PC-9 (cell line): ENCODE measurements at regions of chr22 and their contacts with region 1.

Region 1: GRCh38 chr22:45918459-45919370 is 58.2 kb downstream of the WNT7B start:
- DNase-seq: peak; percentile 92 to 97
- H3K4me3 ChIP-seq: peak overlapping the region; percentile 37; the same call in 1 of the 2 replicates
- H3K27ac ChIP-seq: peak overlapping the region; percentile 85
- H3K4me1 ChIP-seq: peaks cover 70% of the 10 kb centered on the region
- H3K27me3 ChIP-seq: no peaks in the 10 kb centered on the region
- CTCF ChIP-seq: no peak

Region 2: DNA sequence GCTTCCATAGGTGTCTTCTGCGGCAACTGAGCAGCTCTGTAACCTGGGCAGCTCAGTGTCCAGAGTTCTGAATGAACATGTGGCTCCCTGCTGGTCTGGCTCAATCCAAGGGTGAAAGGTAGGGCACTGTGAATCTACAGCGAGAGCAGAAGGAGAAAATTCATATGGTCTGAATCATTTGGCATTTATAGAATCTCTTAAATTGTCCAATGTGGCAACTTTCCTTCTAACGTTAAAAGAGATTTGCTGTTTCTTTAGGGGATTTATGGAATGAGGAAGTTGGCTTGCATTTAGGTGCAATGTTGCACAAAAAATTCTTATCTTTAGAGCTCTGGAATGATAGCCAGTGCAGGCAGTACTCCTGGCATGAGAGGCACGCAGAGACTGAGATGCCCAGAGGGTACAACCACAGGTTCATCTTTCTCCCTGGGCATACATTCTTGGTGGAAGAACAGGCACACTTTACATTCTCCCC is 230.1 kb before region 1 on chr22:
- CTCF ChIA-PET with region 1: no interaction called
- POLR2A ChIA-PET with region 1: interaction called, 3 read pairs
- intact Hi-C with region 1: loop called (anchors 5 kb)
- DNase-seq: peak; percentile 84 to 100
- H3K4me3 ChIP-seq: peak overlapping the region; percentile 32; the same call in 1 of the 2 replicates
- H3K27ac ChIP-seq: peak overlapping the region; percentile 97
- H3K4me1 ChIP-seq: peaks cover 97% of the 10 kb centered on the region
- H3K27me3 ChIP-seq: no peaks in the 10 kb centered on the region
- CTCF ChIP-seq: no peak

Region 3: DNA sequence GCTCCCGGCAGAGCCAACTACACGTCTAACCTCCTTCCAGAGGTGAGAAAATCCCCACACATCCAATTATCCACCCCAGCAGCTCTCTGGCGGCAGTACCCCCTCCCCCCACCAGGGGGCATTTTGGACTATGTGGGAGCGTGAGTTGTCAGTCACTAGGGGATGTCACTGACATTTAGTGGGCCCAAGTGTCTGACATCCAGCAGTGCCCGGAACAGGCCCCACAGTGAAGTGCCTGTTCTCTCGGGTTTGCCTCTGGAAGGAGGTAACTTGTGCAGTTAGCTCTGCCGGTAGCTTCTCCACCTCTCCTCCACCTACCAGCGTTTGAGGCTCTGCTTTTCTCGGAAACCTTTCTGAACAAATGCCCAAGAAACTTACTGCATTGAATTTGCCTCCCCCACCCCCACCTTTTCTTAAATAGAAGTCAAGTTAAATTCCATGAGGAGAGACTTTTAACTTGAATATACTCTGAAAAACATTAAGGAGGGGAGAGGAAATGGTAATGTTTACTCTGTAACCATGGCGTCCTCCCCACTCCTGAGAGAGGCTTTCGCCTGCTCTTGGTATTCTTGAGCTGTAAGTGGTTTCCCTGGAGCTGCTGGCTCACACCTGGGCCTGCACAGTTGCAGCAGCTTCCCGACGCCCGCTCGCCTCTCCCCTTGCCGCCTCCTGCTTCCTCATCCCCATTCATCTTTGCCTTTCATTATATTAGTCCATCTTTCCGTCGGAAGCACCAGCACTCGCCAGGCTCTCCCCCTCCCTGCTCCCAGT is 54.5 kb before region 1 on chr22:
- CTCF ChIA-PET with region 1: interaction called, 4 read pairs
- POLR2A ChIA-PET with region 1: no interaction called
- intact Hi-C with region 1: loop called (anchors 2 kb)
- DNase-seq: peak; percentile 49 to 68
- H3K4me3 ChIP-seq: no peak overlapping the region
- H3K27ac ChIP-seq: no peak overlapping the region
- H3K4me1 ChIP-seq: peaks cover 7% of the 10 kb centered on the region; the same call in 1 of the 2 replicates
- H3K27me3 ChIP-seq: no peaks in the 10 kb centered on the region
- CTCF ChIP-seq: peak; percentile 98

Region 4: DNA sequence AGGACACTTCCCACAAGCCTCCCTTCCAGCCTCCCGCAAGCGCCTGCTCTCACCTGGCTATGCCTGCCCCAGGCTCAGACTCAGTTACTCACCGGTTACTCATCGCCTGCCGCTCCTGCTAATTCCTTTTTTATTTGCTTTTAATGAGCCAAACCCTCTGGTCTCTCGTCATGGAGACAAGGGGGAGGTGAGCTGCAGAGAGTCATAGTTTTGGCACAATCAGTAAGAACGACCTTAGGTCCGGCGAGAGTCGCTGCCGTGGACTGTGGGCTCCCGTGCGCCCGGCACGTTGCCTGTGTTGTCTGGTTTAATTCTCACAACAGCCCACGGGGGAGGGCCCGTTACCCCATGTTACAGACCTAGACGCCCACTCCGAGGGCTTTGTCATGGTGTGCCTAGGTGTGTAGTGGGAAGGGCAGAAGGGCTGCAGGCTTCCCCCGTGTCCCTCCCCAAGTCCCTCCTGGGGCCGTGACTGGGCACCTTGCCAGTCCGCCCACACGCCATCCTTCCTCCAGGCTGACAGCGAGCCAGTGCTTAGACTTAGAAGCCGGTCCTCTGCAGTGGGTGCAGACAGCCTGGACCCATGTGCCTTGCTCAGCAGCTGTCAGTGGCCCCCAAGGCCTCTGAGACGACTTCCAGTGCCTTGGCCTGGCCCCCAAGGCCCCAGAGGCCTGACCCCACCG is 16.1 kb after region 1 on chr22:
- CTCF ChIA-PET with region 1: no interaction called
- POLR2A ChIA-PET with region 1: interaction called, 3 read pairs
- intact Hi-C with region 1: loop called (anchors 2 kb)
- DNase-seq: peak; percentile 84 to 97
- H3K4me3 ChIP-seq: peak overlapping the region; percentile 47; the same call in 1 of the 2 replicates
- H3K27ac ChIP-seq: peak overlapping the region; percentile 78
- H3K4me1 ChIP-seq: peaks cover 37% of the 10 kb centered on the region
- H3K27me3 ChIP-seq: no peaks in the 10 kb centered on the region
- CTCF ChIP-seq: no peak

Region 5: GRCh38 chr22:45968751-45969413 is 50.2 kb after region 1 on chr22:
- CTCF ChIA-PET with region 1: no interaction called
- POLR2A ChIA-PET with region 1: no interaction called
- intact Hi-C with region 1: loop called (anchors 2 kb)
- DNase-seq: peak in 1 of 2 experiments; percentile 79
- H3K4me3 ChIP-seq: peak overlapping the region; percentile 38; the same call in 1 of the 2 replicates
- H3K27ac ChIP-seq: peak overlapping the region; percentile 62
- H3K4me1 ChIP-seq: peaks cover 41% of the 10 kb centered on the region
- H3K27me3 ChIP-seq: no peaks in the 10 kb centered on the region
- CTCF ChIP-seq: no peak

Region 6: GRCh38 chr22:46150034-46150654 is 231.4 kb after region 1 on chr22 and contains the start of gene PPARA:
- CTCF ChIA-PET with region 1: no interaction called
- POLR2A ChIA-PET with region 1: no interaction called
- intact Hi-C with region 1: no loop called
- DNase-seq: peak; percentile 45 to 94
- H3K4me3 ChIP-seq: peak within 1 kb of the TSS; percentile 90
- H3K27ac ChIP-seq: no peak within 1 kb of the TSS
- H3K4me1 ChIP-seq: peaks cover 20% of the 10 kb centered on the region
- H3K27me3 ChIP-seq: peaks cover 7% of the 10 kb centered on the region; the same call in 1 of the 2 replicates
- CTCF ChIP-seq: no peak
- total RNA-seq, gene PPARA: 43.9 and 48.7 TPM in 2 replicates